ENCODE measurements at regions of chr19 and their contacts with region 1.

Region 1: DNA sequence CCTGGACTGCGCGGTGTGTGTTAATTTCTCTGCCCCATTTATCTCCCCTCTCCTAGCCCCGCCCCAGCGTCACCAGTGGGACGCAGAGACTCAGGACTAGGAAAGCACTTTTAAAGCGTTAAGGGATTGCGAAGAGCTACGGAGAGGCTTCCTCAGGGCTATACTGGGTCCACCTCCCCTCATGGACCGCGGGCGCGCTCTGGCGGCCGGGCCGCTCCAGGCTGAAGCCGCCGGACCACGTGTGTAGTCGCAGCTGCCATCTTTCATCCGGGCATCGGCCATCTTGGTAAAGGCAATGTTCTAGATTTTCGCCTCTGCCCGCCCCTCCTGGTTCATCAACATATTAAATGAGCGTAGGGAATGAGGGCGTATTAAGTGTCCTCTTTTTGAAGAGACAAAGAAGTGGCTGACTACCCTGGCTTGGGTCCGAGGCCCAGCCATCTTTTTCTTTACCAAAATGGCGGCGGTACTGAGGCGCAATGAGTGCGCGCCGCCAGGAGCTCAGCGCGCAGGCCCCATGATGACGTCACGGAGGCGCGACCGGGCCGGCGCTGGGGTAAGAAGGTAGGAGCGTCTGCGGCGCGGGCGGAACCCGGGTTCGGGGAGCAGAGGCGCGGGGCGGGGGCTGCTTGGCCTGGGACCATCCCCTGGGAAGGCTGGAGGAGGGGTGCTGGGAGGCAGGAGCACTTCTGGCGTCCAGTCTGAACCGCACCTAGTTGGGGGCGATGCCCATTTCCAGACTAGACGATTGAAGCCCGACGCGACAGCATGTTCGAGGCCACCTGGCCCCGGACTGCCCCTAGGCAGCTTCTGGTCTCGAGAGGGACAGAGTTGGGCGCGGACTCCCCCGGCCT is at the start of gene CCDC124:
- DNase-seq: peak; percentile 94
- H3K4me3 Mint-ChIP-seq: peak within 1 kb of the TSS; percentile 95
- H3K27ac Mint-ChIP-seq: peak within 1 kb of the TSS; percentile 99
- H3K4me1 Mint-ChIP-seq: peaks cover 6% of the 10 kb centered on the region
- H3K27me3 Mint-ChIP-seq: no peaks in the 10 kb centered on the region
- CTCF ChIP-seq: peak; percentile 98
- total RNA-seq, gene CCDC124: 122 and 131 TPM in 2 replicates

Region 2: DNA sequence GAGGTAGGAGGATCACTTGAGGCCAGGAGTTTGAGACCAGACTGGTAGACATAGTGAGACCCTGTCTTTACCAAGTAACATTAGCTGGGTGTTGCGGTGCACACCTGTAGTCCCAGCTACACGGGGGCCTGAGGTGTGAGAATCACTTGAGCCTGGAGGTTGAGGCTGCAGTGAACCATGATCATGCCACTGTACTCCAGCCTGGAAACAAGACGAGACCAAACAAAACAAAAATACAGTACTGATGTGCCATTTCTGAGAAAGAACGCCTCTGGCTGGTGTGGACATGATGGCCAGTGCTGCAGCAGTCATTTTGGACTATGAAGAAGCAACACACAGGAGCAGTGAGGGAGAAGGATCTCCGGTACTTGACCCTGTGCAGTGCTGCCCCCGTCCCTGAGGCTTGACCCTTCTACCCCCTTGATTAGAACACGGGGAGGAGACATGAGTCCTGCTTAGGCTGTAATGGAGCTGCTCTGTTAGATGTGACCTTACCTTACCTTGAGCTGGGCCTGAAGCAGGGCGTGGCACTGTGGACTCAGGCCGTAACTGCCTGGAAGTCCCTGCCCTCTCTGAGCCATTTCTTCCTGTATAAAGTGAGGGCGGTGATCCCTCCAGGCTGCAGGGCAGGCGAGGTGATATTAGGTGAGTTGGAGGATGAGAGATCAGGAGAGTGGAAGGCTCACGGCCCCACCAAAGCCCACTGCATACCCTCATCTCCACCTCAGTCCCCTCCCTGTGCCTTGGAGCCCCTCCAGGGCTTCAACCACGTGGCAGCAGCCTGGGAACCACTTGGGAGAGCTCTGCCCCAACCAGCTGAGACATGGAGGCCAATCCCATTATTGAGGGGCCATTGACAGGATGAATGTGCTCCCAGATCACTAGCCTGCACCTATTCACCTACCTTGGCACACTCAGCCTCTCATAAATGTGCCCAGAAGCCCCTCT is 67.1 kb before region 1 on chr19:
- CTCF ChIA-PET with region 1: interaction called, 90 read pairs
- POLR2A ChIA-PET with region 1: interaction called, 223 read pairs
- intact Hi-C with region 1: loop called (anchors 1 kb)
- DNase-seq: peak; percentile 85
- H3K4me3 Mint-ChIP-seq: no peak overlapping the region
- H3K27ac Mint-ChIP-seq: peak overlapping the region; percentile 58
- H3K4me1 Mint-ChIP-seq: peaks cover 18% of the 10 kb centered on the region
- H3K27me3 Mint-ChIP-seq: no peaks in the 10 kb centered on the region
- CTCF ChIP-seq: no peak

Region 3: DNA sequence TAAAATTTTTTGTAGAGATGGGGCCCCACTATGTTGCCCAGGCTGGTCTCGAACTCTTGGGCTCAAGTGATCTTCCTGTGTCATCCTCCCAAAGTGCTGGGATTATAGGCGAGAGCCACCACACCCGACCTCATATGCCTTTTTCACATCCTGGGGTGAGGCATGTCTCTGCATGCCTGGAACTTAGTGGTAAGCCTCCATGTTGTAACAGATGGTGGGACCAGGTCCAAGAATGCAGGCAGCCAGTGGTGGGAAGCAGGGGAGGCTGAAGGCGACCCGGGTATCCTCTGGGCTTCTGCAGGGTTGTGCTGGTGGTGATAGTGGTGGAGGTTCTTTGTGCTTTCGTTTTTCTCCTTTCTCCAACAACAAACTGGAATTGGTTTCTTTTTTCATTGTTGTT is 30.0 kb before region 1 on chr19:
- CTCF ChIA-PET with region 1: interaction called, 7 read pairs
- POLR2A ChIA-PET with region 1: interaction called, 15 read pairs
- intact Hi-C with region 1: no loop called
- DNase-seq: peak; percentile 90
- H3K4me3 Mint-ChIP-seq: no peak overlapping the region
- H3K27ac Mint-ChIP-seq: peak overlapping the region; percentile 88
- H3K4me1 Mint-ChIP-seq: peaks cover 6% of the 10 kb centered on the region
- H3K27me3 Mint-ChIP-seq: no peaks in the 10 kb centered on the region
- CTCF ChIP-seq: no peak

Region 4: DNA sequence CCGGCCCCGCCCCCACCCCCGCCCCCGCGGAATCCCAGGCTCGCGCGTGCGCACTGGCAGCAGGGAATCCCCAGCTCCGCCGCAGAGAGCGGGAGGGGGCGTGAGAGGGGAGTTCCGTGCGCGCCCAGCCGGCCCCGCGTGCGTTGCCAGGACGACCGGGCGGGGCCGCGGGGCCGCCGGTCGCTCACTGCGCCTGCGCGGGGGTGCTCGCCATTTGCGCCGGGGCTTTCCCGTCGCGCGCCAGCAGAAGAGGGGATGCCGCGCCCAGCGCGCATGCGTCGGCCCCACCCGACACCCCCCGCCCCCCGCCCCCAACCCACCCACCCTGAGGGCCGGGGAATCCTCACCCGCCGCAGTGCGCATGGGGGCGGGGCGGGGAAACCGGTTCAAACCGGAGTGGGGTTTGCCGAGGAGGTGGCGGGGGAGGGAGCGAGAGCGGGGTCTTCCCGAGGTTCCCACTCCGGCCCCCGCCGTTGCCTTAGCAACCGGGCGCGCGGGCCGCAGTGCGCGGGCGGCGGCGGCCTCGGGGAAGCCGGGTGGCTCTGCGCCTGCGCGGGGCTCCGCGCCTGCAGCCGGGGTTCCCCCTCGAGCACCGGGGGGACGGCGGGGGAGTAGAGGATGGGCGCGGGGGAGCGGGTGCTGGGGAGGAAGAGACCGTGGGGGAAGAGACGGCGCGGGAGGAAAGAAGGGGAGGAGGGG is 15.3 kb after region 1 on chr19:
- CTCF ChIA-PET with region 1: interaction called, 16 read pairs
- POLR2A ChIA-PET with region 1: interaction called, 15 read pairs
- intact Hi-C with region 1: no loop called
- DNase-seq: peak; percentile 94
- H3K4me3 Mint-ChIP-seq: peak overlapping the region; percentile 83
- H3K27ac Mint-ChIP-seq: peak overlapping the region; percentile 92
- H3K4me1 Mint-ChIP-seq: peaks cover 19% of the 10 kb centered on the region
- H3K27me3 Mint-ChIP-seq: peaks cover 40% of the 10 kb centered on the region
- CTCF ChIP-seq: no peak

Region 5: DNA sequence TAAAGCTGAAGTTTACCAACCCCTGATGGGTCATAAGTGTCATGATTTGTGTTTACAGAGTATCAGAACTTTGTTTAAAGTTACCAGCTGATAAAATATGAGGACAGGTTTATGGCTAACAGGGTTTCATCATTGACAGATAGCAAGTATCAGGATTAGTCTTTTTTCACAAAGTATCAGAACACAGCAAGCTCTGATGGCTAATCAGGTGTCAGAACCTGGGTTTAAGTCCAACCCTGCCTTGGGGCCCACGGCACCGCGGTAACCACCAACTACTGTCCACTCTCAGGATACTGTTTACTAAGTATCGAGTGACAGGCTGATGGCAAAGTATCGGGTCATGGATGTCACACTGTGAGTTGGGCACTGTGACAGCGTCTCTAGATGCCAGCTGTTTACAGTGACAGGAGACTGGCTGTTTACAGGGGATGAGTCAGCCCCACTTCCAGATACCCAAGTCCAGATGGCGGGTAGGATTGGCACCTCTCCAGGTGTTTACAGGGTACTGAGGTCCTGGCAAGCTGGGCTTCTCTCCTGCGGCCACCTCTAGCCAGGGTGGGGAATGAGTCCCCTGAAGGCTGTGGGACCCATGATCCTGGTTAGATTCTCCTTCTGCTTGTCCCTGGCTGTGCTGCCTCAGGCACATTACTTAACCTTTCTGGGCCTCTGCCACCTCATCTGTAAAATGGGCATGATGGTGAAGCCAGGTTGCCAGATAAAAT is 97.1 kb after region 1 on chr19:
- CTCF ChIA-PET with region 1: no interaction called
- POLR2A ChIA-PET with region 1: no interaction called
- intact Hi-C with region 1: no loop called
- DNase-seq: peak; percentile 66
- H3K4me3 Mint-ChIP-seq: no peak overlapping the region
- H3K27ac Mint-ChIP-seq: peak overlapping the region; percentile 16
- H3K4me1 Mint-ChIP-seq: no peaks in the 10 kb centered on the region
- H3K27me3 Mint-ChIP-seq: no peaks in the 10 kb centered on the region
- CTCF ChIP-seq: no peak

Region 6: GRCh38 chr19:18141031-18141430 is 208.3 kb after region 1 on chr19:
- CTCF ChIA-PET with region 1: no interaction called
- POLR2A ChIA-PET with region 1: no interaction called
- intact Hi-C with region 1: no loop called
- DNase-seq: no peak
- H3K4me3 Mint-ChIP-seq: no peak overlapping the region
- H3K27ac Mint-ChIP-seq: no peak overlapping the region
- H3K4me1 Mint-ChIP-seq: no peaks in the 10 kb centered on the region
- H3K27me3 Mint-ChIP-seq: no peaks in the 10 kb centered on the region
- CTCF ChIP-seq: no peak